Mammary epithelial cell (primary cell): ENCODE measurements at regions of chr1 and their contacts with region 1.

Region 1: GRCh38 chr1:152459596-152460528 is 45.8 kb upstream of the CRNN start:
- DNase-seq: peak; percentile 48
- H3K4me3 ChIP-seq: no peak overlapping the region
- H3K27ac ChIP-seq: no peak overlapping the region
- H3K4me1 ChIP-seq: peaks cover 5% of the 10 kb centered on the region
- H3K27me3 ChIP-seq: no peaks in the 10 kb centered on the region
- CTCF ChIP-seq: peak; percentile 86 to 94

Region 2: DNA sequence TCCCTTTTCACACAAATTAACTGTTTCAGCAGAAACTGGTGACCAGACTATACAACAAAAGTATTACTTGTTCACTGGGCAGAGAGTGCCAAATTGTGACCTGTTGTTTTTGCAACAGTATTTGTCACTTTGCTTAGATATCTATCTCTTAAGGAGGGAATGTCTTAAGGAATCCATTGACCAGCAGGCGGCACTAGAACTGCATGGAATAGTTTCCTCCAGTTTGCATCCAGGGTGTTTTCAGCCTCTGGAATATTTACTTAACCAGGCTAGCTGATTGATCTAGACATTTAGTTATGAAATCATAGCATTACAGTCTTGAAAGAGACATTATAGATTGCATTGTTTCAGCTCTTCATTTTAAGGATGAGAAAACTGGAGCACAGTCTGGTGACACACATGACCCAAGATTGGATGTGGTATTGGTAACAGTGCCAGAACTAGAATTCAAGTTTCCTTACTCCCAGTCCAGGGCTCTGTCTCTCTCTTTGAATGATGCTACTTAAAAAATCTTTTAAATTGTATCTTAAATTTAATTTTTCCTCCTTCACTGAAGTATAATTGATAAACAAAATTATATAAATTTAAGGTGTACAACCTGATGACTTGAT is 317.8 kb before region 1 on chr1:
- CTCF ChIA-PET with region 1: no interaction called
- dilution Hi-C with region 1: loop called (anchors 5 kb)
- in situ Hi-C with region 1: no loop called
- intact Hi-C with region 1: loop called (anchors 1 kb)
- DNase-seq: peak; percentile 54
- H3K4me3 ChIP-seq: no peak overlapping the region
- H3K27ac ChIP-seq: no peak overlapping the region
- H3K4me1 ChIP-seq: no peaks in the 10 kb centered on the region
- H3K27me3 ChIP-seq: peaks cover 7% of the 10 kb centered on the region
- CTCF ChIP-seq: peak; percentile 91 to 92

Region 3: DNA sequence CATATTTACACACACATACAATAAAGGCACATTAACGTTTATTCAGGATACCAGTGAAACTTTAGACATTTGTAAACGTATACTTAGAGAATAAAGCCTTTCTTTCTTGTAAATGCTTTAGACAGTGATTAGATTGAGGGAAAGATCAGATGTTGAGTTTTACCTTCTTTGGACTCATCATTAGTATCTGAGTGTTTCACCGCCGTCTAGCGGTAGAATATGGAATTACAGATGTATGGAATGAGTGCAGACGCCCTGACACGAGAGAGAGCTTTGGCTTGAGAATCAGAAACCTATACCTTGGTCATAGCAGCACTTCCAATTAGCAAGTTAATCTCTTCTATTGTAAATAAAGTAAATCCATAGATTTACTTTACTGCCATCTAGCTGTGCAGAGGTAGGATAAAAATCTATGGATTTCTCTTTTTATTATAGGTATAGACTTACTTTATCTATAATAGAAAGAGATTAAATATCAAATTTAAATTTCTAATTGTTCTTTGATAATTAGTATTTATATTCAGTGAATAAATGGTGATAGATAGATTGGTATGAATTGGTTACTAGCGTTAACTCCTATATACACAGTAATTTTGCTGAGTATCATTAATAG is 112.6 kb before region 1 on chr1:
- CTCF ChIA-PET with region 1: no interaction called
- dilution Hi-C with region 1: no loop called
- in situ Hi-C with region 1: no loop called
- intact Hi-C with region 1: loop called (anchors 1 kb)
- DNase-seq: peak; percentile 64
- H3K4me3 ChIP-seq: no peak overlapping the region
- H3K27ac ChIP-seq: no peak overlapping the region
- H3K4me1 ChIP-seq: no peaks in the 10 kb centered on the region
- H3K27me3 ChIP-seq: peaks cover 7% of the 10 kb centered on the region
- CTCF ChIP-seq: peak; percentile 93 to 99

Region 4: GRCh38 chr1:152398812-152399698 is 60.8 kb before region 1 on chr1:
- CTCF ChIA-PET with region 1: interaction called, 42 read pairs
- dilution Hi-C with region 1: no loop called
- in situ Hi-C with region 1: no loop called
- intact Hi-C with region 1: loop called (anchors 1 kb)
- DNase-seq: peak; percentile 59
- H3K4me3 ChIP-seq: no peak overlapping the region
- H3K27ac ChIP-seq: no peak overlapping the region
- H3K4me1 ChIP-seq: no peaks in the 10 kb centered on the region
- H3K27me3 ChIP-seq: peaks cover 27% of the 10 kb centered on the region
- CTCF ChIP-seq: peak; percentile 81 to 93

Region 5: GRCh38 chr1:152533327-152533938 is 73.6 kb after region 1 on chr1:
- CTCF ChIA-PET with region 1: interaction called, 7 read pairs
- dilution Hi-C with region 1: no loop called
- in situ Hi-C with region 1: no loop called
- intact Hi-C with region 1: loop called (anchors 2 kb)
- DNase-seq: peak; percentile 50
- H3K4me3 ChIP-seq: no peak overlapping the region
- H3K27ac ChIP-seq: no peak overlapping the region
- H3K4me1 ChIP-seq: no peaks in the 10 kb centered on the region
- H3K27me3 ChIP-seq: no peaks in the 10 kb centered on the region
- CTCF ChIP-seq: peak; percentile 90 to 94

Region 6: GRCh38 chr1:152596986-152597385 is 137.1 kb after region 1 on chr1:
- CTCF ChIA-PET with region 1: no interaction called
- dilution Hi-C with region 1: no loop called
- in situ Hi-C with region 1: no loop called
- intact Hi-C with region 1: no loop called
- DNase-seq: no peak
- H3K4me3 ChIP-seq: no peak overlapping the region
- H3K27ac ChIP-seq: no peak overlapping the region
- H3K4me1 ChIP-seq: no peaks in the 10 kb centered on the region
- H3K27me3 ChIP-seq: peaks cover 4% of the 10 kb centered on the region
- CTCF ChIP-seq: no peak

Region 7: DNA sequence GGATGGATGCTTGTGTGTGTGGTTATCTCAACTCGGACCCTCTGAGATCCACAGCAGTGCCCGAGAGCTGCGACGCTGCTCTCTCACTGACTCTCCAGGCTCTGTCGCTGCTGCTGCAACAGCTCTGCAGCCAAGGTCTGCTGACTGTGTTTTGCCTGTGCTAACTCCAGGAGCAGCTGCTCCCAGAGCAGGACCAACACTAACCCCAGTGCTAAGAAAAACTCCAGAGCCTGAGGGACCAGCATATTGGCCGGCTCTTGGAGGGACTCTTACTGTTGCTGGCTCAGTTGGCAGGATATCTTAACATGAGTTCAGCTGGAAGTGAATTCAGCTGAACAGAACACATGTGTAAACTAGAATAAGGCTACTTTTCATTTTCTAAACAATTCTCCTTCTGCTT is 219.6 kb after region 1 on chr1:
- CTCF ChIA-PET with region 1: no interaction called
- dilution Hi-C with region 1: no loop called
- in situ Hi-C with region 1: no loop called
- intact Hi-C with region 1: no loop called
- DNase-seq: no peak
- H3K4me3 ChIP-seq: no peak overlapping the region
- H3K27ac ChIP-seq: no peak overlapping the region
- H3K4me1 ChIP-seq: no peaks in the 10 kb centered on the region
- H3K27me3 ChIP-seq: peaks cover 10% of the 10 kb centered on the region
- CTCF ChIP-seq: no peak